ENCODE measurements at regions of chr3 and their contacts with region 1.

Region 1: GRCh38 chr3:48989796-48990635 is at the start of gene P4HTM:
- DNase-seq: peak; percentile 86
- ATAC-seq: peak; percentile 80
- H3K4me3 Mint-ChIP-seq: peak within 1 kb of the TSS; percentile 91
- H3K27ac Mint-ChIP-seq: peak within 1 kb of the TSS; percentile 93
- H3K4me1 Mint-ChIP-seq: peaks cover 54% of the 10 kb centered on the region
- H3K27me3 Mint-ChIP-seq: no peaks in the 10 kb centered on the region
- total RNA-seq, gene P4HTM: 35.2 to 39.6 TPM

Region 2: DNA sequence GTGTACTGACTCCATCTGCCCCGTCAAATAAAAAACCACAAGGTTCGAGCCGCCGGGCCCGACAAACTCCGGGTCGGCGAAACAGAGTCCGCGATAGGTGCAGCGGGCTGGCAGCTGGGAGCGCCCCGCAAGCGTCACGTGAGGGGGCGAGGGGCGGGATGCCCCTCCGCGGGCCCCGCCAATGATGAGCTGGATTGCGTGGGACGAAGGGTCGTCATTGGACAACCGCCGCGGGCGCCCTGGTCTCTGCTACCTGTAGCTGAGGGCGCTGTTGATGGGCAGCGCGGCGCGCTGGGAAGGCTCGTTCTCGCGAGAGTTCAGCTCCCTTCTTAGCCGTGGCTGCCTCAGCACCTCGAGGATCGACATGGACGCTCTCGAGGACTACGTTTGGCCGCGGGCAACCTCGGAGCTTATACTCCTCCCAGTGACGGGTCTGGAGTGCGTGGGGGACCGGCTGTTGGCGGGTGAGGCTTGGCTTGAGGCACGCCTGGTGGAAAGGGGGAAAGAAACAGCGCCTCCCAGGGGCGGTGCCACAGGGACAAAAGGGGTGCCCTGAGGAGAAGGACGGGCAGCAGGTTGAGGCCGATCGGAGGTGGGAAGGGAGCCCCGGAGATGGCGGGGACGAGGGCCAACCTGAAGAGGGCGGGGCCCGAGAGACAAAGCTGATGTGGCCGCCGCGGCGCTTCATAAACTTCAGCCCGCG is 17.2 kb after region 1 on chr3 and contains the start of gene WDR6:
- CTCF ChIA-PET with region 1: interaction called, 319 read pairs
- POLR2A ChIA-PET with region 1: interaction called, 73 read pairs
- DNase-seq: peak; percentile 99
- ATAC-seq: peak; percentile 94
- H3K4me3 Mint-ChIP-seq: peak within 1 kb of the TSS; percentile 100
- H3K27ac Mint-ChIP-seq: peak within 1 kb of the TSS; percentile 100
- H3K4me1 Mint-ChIP-seq: peaks cover 31% of the 10 kb centered on the region
- H3K27me3 Mint-ChIP-seq: no peaks in the 10 kb centered on the region
- total RNA-seq, gene WDR6: 134 to 140 TPM

Region 3: GRCh38 chr3:49021813-49022687 is 32.0 kb after region 1 on chr3 and contains the start of gene NDUFAF3:
- CTCF ChIA-PET with region 1: interaction called, 319 read pairs
- POLR2A ChIA-PET with region 1: interaction called, 57 read pairs
- DNase-seq: peak; percentile 94
- ATAC-seq: peak; percentile 74
- H3K4me3 Mint-ChIP-seq: peak within 1 kb of the TSS; percentile 97
- H3K27ac Mint-ChIP-seq: peak within 1 kb of the TSS; percentile 99
- H3K4me1 Mint-ChIP-seq: peaks cover 61% of the 10 kb centered on the region
- H3K27me3 Mint-ChIP-seq: no peaks in the 10 kb centered on the region
- total RNA-seq, gene NDUFAF3: 92.1 to 93.7 TPM

Region 4: DNA sequence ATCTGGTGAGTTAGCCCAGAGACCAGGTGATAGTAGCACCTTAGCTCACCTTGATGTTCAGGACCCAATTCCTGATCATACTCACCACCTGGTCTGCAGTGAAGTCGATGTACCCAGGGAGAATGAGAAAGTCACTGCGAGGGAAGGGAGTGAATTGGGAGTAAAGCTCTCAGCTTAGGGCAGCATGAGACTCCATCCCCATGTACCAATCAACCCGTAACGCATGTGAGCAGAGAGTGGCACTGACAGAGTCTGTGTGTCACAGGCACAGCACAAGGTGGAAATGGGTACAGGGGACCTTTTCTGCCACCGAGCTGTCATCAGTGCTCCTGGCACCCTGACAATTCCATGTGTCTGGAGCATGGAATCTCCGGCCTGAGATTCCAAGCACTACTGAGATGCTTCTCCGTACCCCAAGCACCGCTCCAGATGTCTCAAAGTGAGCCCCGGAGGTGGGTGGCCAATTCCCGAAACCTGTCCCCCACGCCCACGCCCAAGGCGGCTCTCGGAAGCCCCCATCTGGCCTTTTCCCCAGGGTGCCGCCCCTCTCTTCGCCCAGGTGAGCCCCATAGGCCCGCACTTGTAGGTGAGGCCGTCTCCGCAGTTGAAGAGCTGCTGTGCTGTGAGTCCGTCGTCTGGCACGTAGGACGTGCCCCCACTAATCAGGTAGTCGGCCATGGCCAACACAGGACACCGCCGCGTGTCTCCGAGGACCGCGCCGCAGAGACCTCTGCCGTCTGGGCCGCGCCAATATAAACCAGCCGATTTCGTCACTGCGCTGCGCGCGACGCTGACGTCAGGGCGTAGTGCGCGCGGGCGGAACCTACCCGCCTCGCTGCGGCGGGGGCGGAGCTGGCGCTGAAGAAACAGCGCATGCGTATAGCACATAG is 38.9 kb after region 1 on chr3 and contains the start of gene IMPDH2:
- CTCF ChIA-PET with region 1: interaction called, 319 read pairs
- POLR2A ChIA-PET with region 1: interaction called, 9 read pairs
- DNase-seq: peak; percentile 94
- ATAC-seq: peak; percentile 95
- H3K4me3 Mint-ChIP-seq: peak within 1 kb of the TSS; percentile 92
- H3K27ac Mint-ChIP-seq: peak within 1 kb of the TSS; percentile 96
- H3K4me1 Mint-ChIP-seq: peaks cover 53% of the 10 kb centered on the region
- H3K27me3 Mint-ChIP-seq: no peaks in the 10 kb centered on the region
- total RNA-seq, gene IMPDH2: 227 to 229 TPM

Region 5: GRCh38 chr3:49120438-49121131 is 130.6 kb after region 1 on chr3 and contains the start of gene USP19:
- CTCF ChIA-PET with region 1: interaction called, 11 read pairs
- POLR2A ChIA-PET with region 1: no interaction called
- DNase-seq: peak; percentile 95
- ATAC-seq: peak; percentile 91
- H3K4me3 Mint-ChIP-seq: peak within 1 kb of the TSS; percentile 89
- H3K27ac Mint-ChIP-seq: peak within 1 kb of the TSS; percentile 95
- H3K4me1 Mint-ChIP-seq: peaks cover 24% of the 10 kb centered on the region
- H3K27me3 Mint-ChIP-seq: no peaks in the 10 kb centered on the region
- total RNA-seq, gene USP19: 58.0 to 60.4 TPM

Region 6: GRCh38 chr3:49295489-49296058 is 305.6 kb after region 1 on chr3:
- CTCF ChIA-PET with region 1: no interaction called
- POLR2A ChIA-PET with region 1: no interaction called
- DNase-seq: peak; percentile 46
- ATAC-seq: no peak
- H3K4me3 Mint-ChIP-seq: no peak overlapping the region
- H3K27ac Mint-ChIP-seq: no peak overlapping the region
- H3K4me1 Mint-ChIP-seq: no peaks in the 10 kb centered on the region
- H3K27me3 Mint-ChIP-seq: no peaks in the 10 kb centered on the region

Region 7: DNA sequence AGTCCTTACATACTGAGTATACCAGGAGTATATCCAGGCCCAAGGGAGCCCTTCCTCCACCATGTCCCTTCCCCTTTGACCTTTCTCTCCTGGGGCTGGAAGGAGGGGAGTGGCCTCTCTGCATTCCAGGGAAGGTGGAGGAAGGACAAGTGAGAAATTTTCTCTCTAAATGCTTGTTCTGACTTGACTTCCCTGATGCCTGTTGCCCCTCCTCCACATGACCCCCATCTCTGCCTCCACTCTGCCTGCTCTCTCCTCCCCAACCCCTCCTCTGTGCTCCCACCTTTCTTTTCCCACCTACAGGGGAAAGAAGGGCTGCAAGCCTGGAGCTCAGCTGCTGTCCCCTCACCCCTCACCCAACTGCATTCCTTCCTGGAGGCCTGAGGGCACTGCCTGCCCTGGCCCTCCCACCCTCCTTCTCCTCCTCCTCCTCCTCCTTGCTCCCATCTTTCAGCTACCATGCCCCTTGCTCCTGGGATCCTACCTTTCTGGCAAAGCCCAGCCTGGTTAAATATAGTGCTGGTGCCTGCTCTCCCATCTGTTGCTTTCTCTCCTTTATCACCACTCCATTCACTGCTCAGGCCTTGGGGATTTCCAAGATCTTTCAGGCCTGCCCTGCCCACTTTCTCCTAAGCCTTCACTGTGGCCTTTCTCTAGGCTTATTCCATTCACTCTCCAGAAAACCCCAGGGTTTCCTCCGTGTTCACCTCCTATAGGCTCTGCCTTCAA is 471.6 kb after region 1 on chr3:
- CTCF ChIA-PET with region 1: no interaction called
- POLR2A ChIA-PET with region 1: no interaction called
- DNase-seq: no peak
- ATAC-seq: no peak
- H3K4me3 Mint-ChIP-seq: no peak overlapping the region
- H3K27ac Mint-ChIP-seq: no peak overlapping the region
- H3K4me1 Mint-ChIP-seq: no peaks in the 10 kb centered on the region
- H3K27me3 Mint-ChIP-seq: peaks cover 2% of the 10 kb centered on the region